Activated CD8-positive, alpha-beta memory T cell treated with anti-CD3 and anti-CD28 coated beads, Interleukin-2, amount 10 ng/mL, durations not matched to agents 7 days and 5 days (primary cell): ENCODE measurements at regions of chr21 and their contacts with region 1.

Region 1: GRCh38 chr21:44801468-44802395 is at the start of gene UBE2G2:
- DNase-seq: peak; percentile 86
- ATAC-seq: peak; percentile 96
- H3K4me3 Mint-ChIP-seq: peak within 1 kb of the TSS; percentile 99
- H3K27ac Mint-ChIP-seq: peak within 1 kb of the TSS; percentile 92
- H3K4me1 Mint-ChIP-seq: peaks cover 49% of the 10 kb centered on the region
- H3K27me3 Mint-ChIP-seq: no peaks in the 10 kb centered on the region
- total RNA-seq, gene UBE2G2: 103 to 121 TPM

Region 2: DNA sequence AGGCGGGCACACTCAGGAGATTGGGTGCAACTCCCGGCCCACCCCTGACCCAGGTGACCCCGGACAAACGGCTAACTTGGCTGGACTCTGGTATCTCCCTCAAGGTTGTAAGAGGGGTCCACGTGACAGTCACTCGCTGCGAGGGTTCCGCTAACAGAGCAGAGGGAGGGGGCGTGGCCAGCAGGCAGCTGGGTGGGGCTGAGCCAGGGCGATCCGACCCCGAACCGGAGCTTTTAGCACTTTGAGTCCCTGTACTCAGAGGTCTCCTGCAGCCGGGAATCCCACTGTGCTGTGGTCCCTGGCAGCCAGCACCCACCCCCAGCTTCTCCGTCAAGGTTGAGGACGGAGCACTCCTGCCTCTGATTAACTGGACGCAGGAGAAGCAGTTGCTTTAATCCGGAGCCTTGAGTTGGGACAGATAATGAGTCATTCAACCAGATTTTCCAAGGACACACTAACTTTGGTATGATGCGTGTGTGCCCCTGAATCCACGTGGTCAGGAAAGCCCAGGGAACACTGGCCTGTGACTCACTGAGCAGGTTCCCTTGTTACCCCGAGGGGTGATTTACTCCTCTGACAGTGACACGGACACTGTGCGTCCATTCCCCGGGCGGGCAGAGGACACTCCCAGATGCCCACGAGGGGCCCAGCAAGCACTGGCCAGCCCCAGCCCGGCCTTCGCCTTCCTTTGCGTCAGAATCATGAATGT is 431.6 kb before region 1 on chr21:
- CTCF ChIA-PET with region 1: no interaction called
- DNase-seq: peak; percentile 36
- ATAC-seq: no peak
- H3K4me3 Mint-ChIP-seq: no peak overlapping the region
- H3K27ac Mint-ChIP-seq: no peak overlapping the region
- H3K4me1 Mint-ChIP-seq: peaks cover 24% of the 10 kb centered on the region
- H3K27me3 Mint-ChIP-seq: peaks cover 2% of the 10 kb centered on the region

Region 3: DNA sequence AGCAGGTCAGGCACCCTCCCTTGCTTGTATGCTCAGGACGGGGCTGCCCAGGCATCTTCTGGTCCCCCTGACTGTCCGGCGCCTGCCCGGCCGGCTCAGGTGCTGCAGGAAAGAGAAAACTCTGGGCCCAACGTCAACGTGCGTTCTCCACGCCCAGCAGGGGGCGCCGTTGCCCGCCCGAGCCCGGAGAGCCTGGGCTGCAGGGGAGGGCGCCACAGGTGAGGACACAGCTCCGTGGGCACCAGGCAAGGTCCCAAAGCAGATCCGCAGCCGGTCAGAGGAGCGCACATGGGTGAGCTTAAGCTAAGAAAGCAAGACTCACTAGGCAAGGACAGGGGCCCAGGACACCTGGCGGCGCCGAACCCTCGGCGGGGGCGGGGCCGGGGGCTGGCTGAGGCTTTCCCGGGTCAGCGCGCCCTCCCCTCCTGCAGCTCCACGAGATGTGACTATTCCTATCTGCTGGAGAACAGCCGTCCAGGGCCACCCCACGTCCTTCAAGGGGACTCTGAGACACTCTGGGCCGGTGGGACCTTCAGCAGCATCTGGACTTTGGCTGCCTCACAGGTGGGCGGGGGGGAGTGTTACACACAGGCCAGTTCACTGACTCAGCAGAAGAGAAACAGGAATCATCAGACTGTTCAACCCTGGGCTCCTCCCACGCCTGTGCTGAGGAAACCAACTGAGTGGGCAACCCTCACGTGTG is 291.1 kb before region 1 on chr21:
- CTCF ChIA-PET with region 1: interaction called, 21 read pairs
- DNase-seq: peak; percentile 80
- ATAC-seq: peak; percentile 89
- H3K4me3 Mint-ChIP-seq: no peak overlapping the region
- H3K27ac Mint-ChIP-seq: no peak overlapping the region
- H3K4me1 Mint-ChIP-seq: peaks cover 9% of the 10 kb centered on the region
- H3K27me3 Mint-ChIP-seq: no peaks in the 10 kb centered on the region

Region 4: DNA sequence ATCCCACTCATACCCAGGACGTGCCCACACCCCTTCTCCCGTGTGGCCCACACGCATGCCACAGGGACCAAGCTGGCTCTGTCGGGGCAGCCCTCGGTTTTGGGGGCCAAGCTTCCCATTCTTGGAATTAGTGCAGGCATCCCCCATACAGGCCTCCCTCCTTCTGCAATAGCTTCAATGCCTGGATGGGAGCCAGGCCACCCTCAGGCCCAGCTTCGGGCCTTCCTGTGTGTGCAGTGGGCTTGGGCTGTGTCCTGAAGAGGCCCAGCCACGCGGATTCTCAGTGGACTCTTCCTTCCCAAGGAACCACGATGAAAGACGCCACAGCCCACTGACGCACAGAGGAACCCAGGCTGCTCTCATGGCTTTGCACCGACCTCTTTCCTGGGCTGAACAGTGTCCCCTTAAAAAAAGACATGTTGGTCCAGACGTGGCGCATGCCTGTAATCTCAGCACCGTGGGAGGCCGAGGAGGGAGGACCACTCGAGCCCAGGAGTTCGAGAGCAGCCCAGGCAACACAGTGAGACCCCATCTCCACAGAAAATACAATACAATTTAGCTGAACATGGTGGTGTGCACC is 152.1 kb before region 1 on chr21:
- CTCF ChIA-PET with region 1: no interaction called
- DNase-seq: no peak
- ATAC-seq: no peak
- H3K4me3 Mint-ChIP-seq: no peak overlapping the region
- H3K27ac Mint-ChIP-seq: no peak overlapping the region
- H3K4me1 Mint-ChIP-seq: peaks cover 15% of the 10 kb centered on the region
- H3K27me3 Mint-ChIP-seq: no peaks in the 10 kb centered on the region

Region 5: DNA sequence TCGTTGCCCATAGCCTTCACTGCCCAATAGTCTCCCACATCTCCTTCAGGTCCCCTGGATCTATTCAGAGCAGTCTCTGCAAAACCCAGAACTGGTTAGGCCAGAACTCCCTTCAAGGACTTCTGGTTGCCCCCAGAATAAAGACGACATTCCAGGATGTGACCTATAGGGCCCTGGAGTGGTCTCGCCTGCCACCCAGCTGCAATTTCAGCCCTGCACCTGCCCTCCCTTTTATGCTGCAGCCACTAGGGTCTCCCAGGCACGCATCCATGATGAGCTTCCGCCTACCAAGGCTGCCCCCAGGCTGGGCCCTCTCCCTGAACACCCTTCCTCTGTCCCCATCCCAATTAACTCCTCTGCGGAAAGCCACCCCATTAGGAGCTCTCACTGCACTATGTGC is 83.2 kb before region 1 on chr21:
- CTCF ChIA-PET with region 1: no interaction called
- DNase-seq: no peak
- ATAC-seq: no peak
- H3K4me3 Mint-ChIP-seq: no peak overlapping the region
- H3K27ac Mint-ChIP-seq: no peak overlapping the region
- H3K4me1 Mint-ChIP-seq: peaks cover 9% of the 10 kb centered on the region
- H3K27me3 Mint-ChIP-seq: peaks cover 69% of the 10 kb centered on the region

Region 6: DNA sequence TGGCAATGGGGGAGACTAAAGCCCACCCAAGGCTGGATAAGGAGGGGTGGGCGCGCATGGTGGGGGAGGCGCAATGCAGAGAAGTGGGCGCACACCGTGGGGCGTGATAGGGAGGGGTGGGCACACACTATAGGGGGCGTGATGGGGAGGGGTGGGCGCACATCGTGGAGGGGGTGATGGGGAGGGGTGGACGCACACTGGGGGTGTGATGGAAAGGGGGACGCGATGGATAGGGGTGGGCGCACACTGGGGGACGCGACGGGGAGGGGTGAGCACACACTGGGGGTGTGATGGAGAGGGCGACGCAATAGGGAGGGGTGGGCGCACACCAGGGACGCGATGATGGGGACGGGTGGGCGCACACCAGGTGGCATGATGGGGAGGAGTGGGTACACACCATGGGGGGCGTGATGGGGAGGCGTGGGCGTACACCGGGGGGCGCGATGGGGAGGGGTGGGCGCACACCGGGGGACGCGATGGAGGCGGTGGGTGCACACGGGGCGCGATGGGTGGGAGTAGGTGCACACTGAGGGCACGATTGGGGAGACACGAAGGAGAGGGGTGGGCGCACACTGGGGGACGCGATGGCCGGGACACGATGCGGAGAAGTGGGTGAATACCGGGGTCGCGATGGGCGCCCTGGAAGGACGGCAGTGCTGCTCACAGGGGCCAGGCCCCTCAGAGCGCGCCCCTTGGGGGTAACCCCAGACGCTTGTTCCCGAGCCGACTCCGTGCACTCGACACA is 15.2 kb after region 1 on chr21:
- CTCF ChIA-PET with region 1: interaction called, 14 read pairs
- DNase-seq: no peak
- ATAC-seq: no peak
- H3K4me3 Mint-ChIP-seq: peak overlapping the region; percentile 67
- H3K27ac Mint-ChIP-seq: no peak overlapping the region
- H3K4me1 Mint-ChIP-seq: peaks cover 22% of the 10 kb centered on the region
- H3K27me3 Mint-ChIP-seq: no peaks in the 10 kb centered on the region

Region 7: DNA sequence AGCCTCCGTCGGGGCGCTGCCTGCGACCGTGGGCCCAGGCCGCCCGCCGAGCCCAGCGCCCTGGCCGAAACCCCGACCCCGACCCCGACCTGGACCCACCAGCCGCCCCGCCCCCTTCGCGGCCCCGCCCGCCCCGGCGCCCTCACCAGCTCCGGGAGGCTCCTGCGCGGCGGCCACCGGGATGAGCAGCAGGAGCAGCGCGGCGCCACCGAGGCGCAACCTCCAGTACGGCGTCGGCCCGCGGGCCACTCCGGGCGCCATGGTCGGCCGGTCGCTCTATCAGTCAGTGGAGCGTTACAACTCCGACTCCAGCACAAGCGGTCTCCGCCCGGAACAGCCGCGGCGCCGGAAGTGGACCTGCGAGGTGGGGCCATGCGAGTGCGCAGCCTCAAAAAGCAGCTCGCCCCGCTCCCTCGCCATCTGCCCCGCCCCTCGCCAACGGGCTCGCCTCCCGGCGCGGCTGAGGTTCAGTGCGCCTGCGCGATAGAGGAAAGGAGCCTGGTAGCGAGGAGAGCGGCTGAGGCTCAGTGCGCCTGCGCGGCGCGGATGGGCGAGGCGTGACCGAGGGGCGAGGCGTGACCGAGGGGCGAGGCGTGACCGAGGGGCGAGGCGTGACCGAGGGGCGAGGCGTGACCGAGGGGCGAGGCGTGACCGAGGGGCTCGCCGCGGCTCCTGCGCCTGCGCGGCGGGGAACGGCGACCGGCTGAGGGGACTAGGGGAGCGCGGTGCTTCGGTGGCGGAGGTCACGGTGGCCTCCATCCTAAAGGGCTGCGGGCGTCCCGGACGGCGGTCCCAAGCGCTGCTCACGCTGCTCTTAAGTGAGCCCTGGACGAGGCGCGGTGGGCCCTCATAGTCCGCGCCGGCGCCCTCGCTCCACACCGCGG is 71.9 kb after region 1 on chr21 and contains the start of gene PTTG1IP:
- CTCF ChIA-PET with region 1: interaction called, 56 read pairs
- DNase-seq: peak; percentile 99
- ATAC-seq: peak; percentile 86
- H3K4me3 Mint-ChIP-seq: peak within 1 kb of the TSS; percentile 86
- H3K27ac Mint-ChIP-seq: peak within 1 kb of the TSS; percentile 90
- H3K4me1 Mint-ChIP-seq: peaks cover 41% of the 10 kb centered on the region
- H3K27me3 Mint-ChIP-seq: no peaks in the 10 kb centered on the region
- total RNA-seq, gene PTTG1IP: 46.0 to 49.9 TPM

Region 8: GRCh38 chr21:44880762-44881585 is 79.2 kb after region 1 on chr21:
- CTCF ChIA-PET with region 1: interaction called, 56 read pairs
- DNase-seq: no peak
- ATAC-seq: peak; percentile 32
- H3K4me3 Mint-ChIP-seq: no peak overlapping the region
- H3K27ac Mint-ChIP-seq: no peak overlapping the region
- H3K4me1 Mint-ChIP-seq: peaks cover 15% of the 10 kb centered on the region
- H3K27me3 Mint-ChIP-seq: no peaks in the 10 kb centered on the region

Region 9: GRCh38 chr21:44927587-44928461 is 126.1 kb after region 1 on chr21:
- CTCF ChIA-PET with region 1: interaction called, 49 read pairs
- DNase-seq: peak; percentile 91
- ATAC-seq: peak; percentile 60
- H3K4me3 Mint-ChIP-seq: peak overlapping the region; percentile 72
- H3K27ac Mint-ChIP-seq: peak overlapping the region; percentile 93
- H3K4me1 Mint-ChIP-seq: peaks cover 78% of the 10 kb centered on the region
- H3K27me3 Mint-ChIP-seq: no peaks in the 10 kb centered on the region

Region 10: DNA sequence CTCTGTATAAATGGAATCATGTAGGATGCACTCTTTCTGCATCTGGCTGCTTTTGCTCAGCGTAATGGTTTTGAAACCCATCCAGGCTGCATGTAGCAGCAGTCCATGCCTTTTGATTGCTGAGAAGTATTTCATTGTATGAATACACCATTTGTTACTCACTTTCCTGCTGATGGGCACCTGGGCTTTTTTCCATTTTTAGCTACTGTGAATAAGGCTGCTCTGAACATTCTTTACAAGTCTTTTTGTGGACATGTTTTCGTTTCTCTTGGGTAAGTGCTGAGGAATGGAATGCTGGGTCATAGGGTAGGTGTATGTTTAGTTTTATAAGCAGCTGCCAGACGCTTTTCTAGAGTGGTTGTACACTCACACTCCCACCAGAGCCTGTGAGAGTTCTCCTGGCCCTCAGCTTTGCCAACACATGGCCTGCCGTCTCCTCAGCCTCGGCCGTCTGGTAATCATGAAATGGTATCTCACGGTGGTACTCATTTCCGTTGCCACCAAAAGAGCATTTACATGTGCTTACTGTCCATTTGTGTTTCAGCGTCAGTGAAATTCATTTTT is 160.8 kb after region 1 on chr21:
- CTCF ChIA-PET with region 1: no interaction called
- DNase-seq: no peak
- ATAC-seq: no peak
- H3K4me3 Mint-ChIP-seq: no peak overlapping the region
- H3K27ac Mint-ChIP-seq: no peak overlapping the region
- H3K4me1 Mint-ChIP-seq: peaks cover 21% of the 10 kb centered on the region
- H3K27me3 Mint-ChIP-seq: no peaks in the 10 kb centered on the region